CD4-positive, alpha-beta memory T cell (primary cell): ENCODE measurements at regions of chr19 and their contacts with region 1.

Region 1: GRCh38 chr19:58305065-58305931 is at the start of gene ERVK3-1:
- DNase-seq: peak; percentile 93 to 97 (median 95)
- H3K4me3 ChIP-seq: peak within 1 kb of the TSS; percentile 54 to 83
- H3K4me3 Mint-ChIP-seq: peak within 1 kb of the TSS; percentile 97 to 100 (median 100)
- H3K27ac ChIP-seq: peak within 1 kb of the TSS; percentile 95
- H3K27ac Mint-ChIP-seq: peak within 1 kb of the TSS; percentile 97 to 100 (median 99)
- H3K4me1 ChIP-seq: peaks cover 31% of the 10 kb centered on the region
- H3K4me1 Mint-ChIP-seq: peaks cover 34 to 59% (median 45%) of the 10 kb centered on the region in 4 donors
- H3K27me3 ChIP-seq: no peaks in the 10 kb centered on the region
- H3K27me3 Mint-ChIP-seq: no peaks in the 10 kb centered on the region
- total RNA-seq, gene ERVK3-1: 72.3 to 76.6 TPM

Region 2: DNA sequence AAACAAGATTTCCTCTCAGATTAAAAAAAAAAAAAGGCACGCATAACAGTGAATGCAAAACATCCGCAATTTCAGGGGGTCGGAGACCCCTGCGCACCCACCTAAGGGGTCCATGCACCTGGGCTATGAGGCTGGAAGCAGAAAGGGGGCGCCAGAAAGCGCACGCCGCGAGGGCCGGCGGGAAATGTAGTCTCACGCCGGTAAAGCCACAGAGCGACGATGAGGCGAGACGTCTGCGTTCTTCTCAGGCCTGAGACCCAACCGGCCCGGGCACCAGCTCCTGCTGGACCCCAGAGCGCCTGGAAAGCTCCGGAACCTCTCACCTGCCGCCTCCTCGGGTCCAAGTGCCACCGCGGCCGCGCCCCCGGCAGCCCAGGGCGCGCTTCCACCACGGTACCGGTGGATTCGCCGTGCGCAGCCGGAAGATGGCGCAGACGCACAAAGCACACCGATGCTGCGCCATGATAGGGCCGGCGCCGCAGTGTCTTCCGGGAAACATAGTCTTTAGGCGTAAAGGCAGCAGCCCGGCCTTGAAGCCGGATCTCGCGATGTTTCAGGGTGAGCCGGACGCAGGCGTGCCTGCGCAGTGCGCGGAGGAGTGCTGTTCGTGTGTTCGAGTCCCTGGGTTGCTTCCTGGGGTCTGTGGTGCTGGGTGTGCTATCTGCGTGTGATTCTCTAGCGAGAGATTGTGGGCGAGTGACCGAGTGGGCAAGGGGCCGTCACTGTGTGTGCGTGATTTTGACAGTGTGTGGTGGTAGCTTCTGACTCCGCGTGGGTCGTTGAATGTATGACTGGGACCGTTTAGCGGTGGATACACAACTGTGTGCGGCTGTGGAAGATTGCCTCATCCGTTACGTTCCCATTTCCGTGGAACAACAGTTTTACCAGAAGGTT is 1911.9 kb before region 1 on chr19 and contains the start of gene ZNF582:
- CTCF ChIA-PET with region 1: no interaction called
- POLR2A ChIA-PET with region 1: no interaction called
- intact Hi-C with region 1: loop called (anchors 5 kb)
- DNase-seq: peak; percentile 90 to 94 (median 93)
- H3K4me3 ChIP-seq: peak within 1 kb of the TSS; percentile 73 to 87
- H3K4me3 Mint-ChIP-seq: peak within 1 kb of the TSS; percentile 88 to 100 (median 97)
- H3K27ac ChIP-seq: peak within 1 kb of the TSS; percentile 92
- H3K27ac Mint-ChIP-seq: peak within 1 kb of the TSS; percentile 83 to 100 (median 95)
- H3K4me1 ChIP-seq: peaks cover 8% of the 10 kb centered on the region
- H3K4me1 Mint-ChIP-seq: peaks cover 6 to 16% (median 7%) of the 10 kb centered on the region in 4 donors
- H3K27me3 ChIP-seq: no peaks in the 10 kb centered on the region
- H3K27me3 Mint-ChIP-seq: no peaks in the 10 kb centered on the region
- total RNA-seq, gene ZNF582: 7.3 to 7.8 TPM

Region 3: DNA sequence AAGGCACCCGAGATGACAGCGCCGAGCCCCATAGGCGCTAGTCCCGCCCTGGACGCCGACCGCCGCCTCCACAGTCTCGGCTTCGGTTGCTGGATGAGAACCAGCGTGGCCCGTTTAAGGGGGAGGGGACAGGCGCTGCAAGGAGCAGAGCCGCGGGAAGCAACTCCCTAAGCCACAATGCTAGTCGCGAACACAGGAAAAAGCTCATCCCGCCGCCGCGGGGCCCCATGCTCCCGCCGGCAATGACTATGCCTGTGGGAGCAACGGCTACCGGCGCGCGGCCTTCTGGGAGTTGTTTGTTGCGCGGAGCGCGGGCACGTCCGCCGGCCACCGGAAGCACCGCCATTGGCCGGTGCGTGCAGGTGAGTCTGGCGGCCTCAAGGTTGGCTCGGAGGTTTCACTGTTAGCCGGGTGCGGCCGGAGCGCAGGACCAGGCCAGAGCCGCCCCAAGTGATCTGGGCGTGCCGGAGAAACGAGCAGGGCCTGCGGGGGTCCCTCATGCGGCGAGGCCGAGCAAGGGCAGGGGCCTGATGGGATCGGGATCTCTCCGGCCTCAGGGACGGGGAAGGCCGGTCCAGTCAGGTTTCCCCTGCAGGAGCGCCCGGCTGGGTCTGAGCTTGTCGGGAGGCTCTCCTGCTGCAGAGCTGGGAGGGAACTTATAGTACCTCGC is 76.6 kb before region 1 on chr19 and contains the start of gene ZNF544:
- CTCF ChIA-PET with region 1: interaction called, 7 read pairs
- POLR2A ChIA-PET with region 1: interaction called, 13 read pairs
- intact Hi-C with region 1: loop called (anchors 1 kb)
- DNase-seq: peak; percentile 33 to 60 (median 41)
- H3K4me3 ChIP-seq: peak within 1 kb of the TSS; percentile 68 to 70
- H3K4me3 Mint-ChIP-seq: peak within 1 kb of the TSS; percentile 92 to 97 (median 94)
- H3K27ac ChIP-seq: peak within 1 kb of the TSS; percentile 50
- H3K27ac Mint-ChIP-seq: peak within 1 kb of the TSS; percentile 82 to 95 (median 88)
- H3K4me1 ChIP-seq: peaks cover 15% of the 10 kb centered on the region
- H3K4me1 Mint-ChIP-seq: peaks cover 15 to 31% (median 24%) of the 10 kb centered on the region in 4 donors
- H3K27me3 ChIP-seq: no peaks in the 10 kb centered on the region
- H3K27me3 Mint-ChIP-seq: no peaks in the 10 kb centered on the region
- total RNA-seq, gene ZNF544: 63.3 to 67.6 TPM

Region 4: GRCh38 chr19:58326914-58327726 is 21.8 kb after region 1 on chr19 and contains the start of gene ZSCAN22:
- CTCF ChIA-PET with region 1: no interaction called
- POLR2A ChIA-PET with region 1: interaction called, 11 read pairs
- intact Hi-C with region 1: loop called (anchors 1 kb)
- DNase-seq: peak; percentile 80 to 89 (median 83)
- H3K4me3 ChIP-seq: peak within 1 kb of the TSS; percentile 32 to 77
- H3K4me3 Mint-ChIP-seq: no peak within 1 kb of the TSS
- H3K27ac ChIP-seq: peak within 1 kb of the TSS; percentile 80
- H3K27ac Mint-ChIP-seq: no peak within 1 kb of the TSS
- H3K4me1 ChIP-seq: peaks cover 25% of the 10 kb centered on the region
- H3K4me1 Mint-ChIP-seq: peaks cover 0 to 2% (median under 1%) of the 10 kb centered on the region in 4 donors
- H3K27me3 ChIP-seq: no peaks in the 10 kb centered on the region
- H3K27me3 Mint-ChIP-seq: no peaks in the 10 kb centered on the region
- total RNA-seq, gene ZSCAN22: 5.0 to 5.3 TPM

Region 5: GRCh38 chr19:58400916-58401839 is 95.9 kb after region 1 on chr19:
- CTCF ChIA-PET with region 1: no interaction called
- POLR2A ChIA-PET with region 1: no interaction called
- intact Hi-C with region 1: loop called (anchors 1 kb)
- DNase-seq: peak; percentile 98 to 100 (median 99)
- H3K4me3 ChIP-seq: peak overlapping the region; percentile 57 to 59
- H3K4me3 Mint-ChIP-seq: peak overlapping the region; percentile 87 to 97 (median 91)
- H3K27ac ChIP-seq: peak overlapping the region; percentile 74
- H3K27ac Mint-ChIP-seq: peak overlapping the region; percentile 89 to 99 (median 97)
- H3K4me1 ChIP-seq: peaks cover 20% of the 10 kb centered on the region
- H3K4me1 Mint-ChIP-seq: peaks cover 5 to 20% (median 10%) of the 10 kb centered on the region in 4 donors
- H3K27me3 ChIP-seq: peaks cover 8% of the 10 kb centered on the region
- H3K27me3 Mint-ChIP-seq: peaks cover 6 to 9% of the 10 kb centered on the region in 2 donors

Region 6: GRCh38 chr19:58451358-58452101 is 146.2 kb after region 1 on chr19 and contains the start of gene ZNF324B:
- CTCF ChIA-PET with region 1: no interaction called
- POLR2A ChIA-PET with region 1: no interaction called
- intact Hi-C with region 1: loop called (anchors 1 kb)
- DNase-seq: peak; percentile 96 to 97 (median 96)
- H3K4me3 ChIP-seq: peak within 1 kb of the TSS; percentile 60 to 69
- H3K4me3 Mint-ChIP-seq: peak within 1 kb of the TSS; percentile 85 to 93 (median 88)
- H3K27ac ChIP-seq: peak within 1 kb of the TSS; percentile 67
- H3K27ac Mint-ChIP-seq: peak within 1 kb of the TSS; percentile 67 to 93 (median 84)
- H3K4me1 ChIP-seq: peaks cover 7% of the 10 kb centered on the region
- H3K4me1 Mint-ChIP-seq: peaks cover 13 to 31% (median 19%) of the 10 kb centered on the region in 4 donors
- H3K27me3 ChIP-seq: no peaks in the 10 kb centered on the region
- H3K27me3 Mint-ChIP-seq: peaks cover 6 to 11% of the 10 kb centered on the region in 2 donors
- total RNA-seq, gene ZNF324B: 13.1 to 13.7 TPM